ENCODE measurements at regions of chr20 and their contacts with region 1.

Region 1: GRCh38 chr20:53100476-53100911 is 128.3 kb downstream of the TSHZ2 start:
- DNase-seq: peak; percentile 5
- H3K4me3 ChIP-seq: peak overlapping the region in 1 of 3 experiments; percentile 21
- H3K27ac ChIP-seq: peak overlapping the region; percentile 43
- H3K4me1 ChIP-seq: peaks cover 32% of the 10 kb centered on the region
- H3K27me3 ChIP-seq: no peaks in the 10 kb centered on the region
- CTCF ChIP-seq: no peak

Region 2: DNA sequence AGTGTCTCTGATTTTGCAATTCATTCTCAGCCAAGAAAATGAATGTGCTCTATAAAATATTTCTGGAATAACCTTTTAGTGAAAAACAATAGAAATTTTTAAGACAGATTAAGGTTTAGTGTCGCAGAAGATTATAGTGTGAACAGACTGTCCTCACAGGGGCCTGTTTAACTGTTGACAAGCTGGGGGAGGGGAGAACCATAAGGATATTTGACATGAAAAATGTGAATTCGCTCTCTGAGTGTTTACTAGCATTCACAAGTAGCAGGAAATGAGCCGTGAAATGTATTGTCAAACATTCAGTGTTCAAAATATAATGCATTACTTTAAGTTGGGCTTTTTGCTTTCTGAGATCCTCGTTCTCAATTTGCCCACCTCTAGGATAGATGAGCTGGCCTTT is 263.1 kb before region 1 on chr20:
- CTCF ChIA-PET with region 1: no interaction called
- dilution Hi-C with region 1: no loop called
- in situ Hi-C with region 1: no loop called
- intact Hi-C with region 1: no loop called
- DNase-seq: no peak
- H3K4me3 ChIP-seq: no peak overlapping the region
- H3K27ac ChIP-seq: no peak overlapping the region
- H3K4me1 ChIP-seq: no peaks in the 10 kb centered on the region
- H3K27me3 ChIP-seq: no peaks in the 10 kb centered on the region
- CTCF ChIP-seq: no peak

Region 3: GRCh38 chr20:53080969-53081871 is 19.3 kb before region 1 on chr20:
- CTCF ChIA-PET with region 1: no interaction called
- dilution Hi-C with region 1: no loop called
- in situ Hi-C with region 1: no loop called
- intact Hi-C with region 1: loop called (anchors 2 kb)
- DNase-seq: peak; percentile 81
- H3K4me3 ChIP-seq: peak overlapping the region; percentile 16 to 32 (median 26)
- H3K27ac ChIP-seq: peak overlapping the region; percentile 87
- H3K4me1 ChIP-seq: peaks cover 33% of the 10 kb centered on the region
- H3K27me3 ChIP-seq: no peaks in the 10 kb centered on the region
- CTCF ChIP-seq: no peak

Measured in mammary epithelial cell (primary cell).